Mammary epithelial cell (primary cell): ENCODE measurements at regions of chr2 and their contacts with region 1.

Region 1: DNA sequence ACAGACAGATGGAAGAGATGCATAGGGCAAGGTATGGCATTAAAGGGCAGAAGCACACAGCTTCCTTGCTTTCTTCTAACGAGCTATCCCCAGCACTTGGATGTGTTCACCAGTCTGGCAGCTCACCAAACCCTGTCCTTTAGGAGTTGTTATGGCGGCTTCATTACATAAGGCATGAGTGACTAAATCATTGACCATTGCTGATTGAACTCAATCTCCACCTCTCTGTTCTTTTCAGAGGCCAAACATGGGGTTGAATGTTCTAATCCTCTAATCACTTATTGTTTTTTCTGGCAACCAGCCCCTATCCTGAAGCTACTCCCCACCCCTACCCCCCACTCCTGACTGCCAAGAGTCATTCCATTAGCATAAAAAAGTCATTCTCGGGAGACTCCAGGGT is 301.8 kb downstream of the XIRP2 start:
- DNase-seq: peak; percentile 50
- H3K4me3 ChIP-seq: no peak overlapping the region
- H3K27ac ChIP-seq: no peak overlapping the region
- H3K4me1 ChIP-seq: peaks cover 20% of the 10 kb centered on the region
- H3K27me3 ChIP-seq: no peaks in the 10 kb centered on the region
- CTCF ChIP-seq: no peak

Region 2: DNA sequence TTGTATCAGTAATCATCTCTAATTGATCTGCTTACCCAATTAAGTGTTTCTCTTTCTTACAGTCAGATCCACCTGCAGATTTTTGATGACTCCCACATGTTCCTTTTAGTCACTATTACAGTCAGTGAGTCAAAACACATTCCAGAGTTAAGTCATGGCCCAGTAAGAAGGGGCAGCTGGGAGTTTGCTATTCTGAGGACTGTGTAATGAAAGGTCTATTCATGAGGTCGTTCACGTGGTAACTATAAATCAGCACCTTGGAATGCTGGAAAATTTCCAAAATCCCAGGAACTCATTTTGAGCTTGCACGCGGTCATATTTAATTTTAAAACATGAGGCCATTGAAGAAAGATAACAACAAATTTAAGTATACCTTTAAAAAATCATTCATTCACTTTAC is 49.3 kb before region 1 on chr2:
- CTCF ChIA-PET with region 1: no interaction called
- dilution Hi-C with region 1: no loop called
- in situ Hi-C with region 1: loop called in 1 of 2 experiments (anchors 5 kb)
- intact Hi-C with region 1: no loop called
- DNase-seq: peak; percentile 98
- H3K4me3 ChIP-seq: no peak overlapping the region
- H3K27ac ChIP-seq: peak overlapping the region; percentile 81
- H3K4me1 ChIP-seq: peaks cover 32% of the 10 kb centered on the region
- H3K27me3 ChIP-seq: no peaks in the 10 kb centered on the region
- CTCF ChIP-seq: no peak

Region 3: GRCh38 chr2:167157523-167157922 is 32.5 kb before region 1 on chr2:
- CTCF ChIA-PET with region 1: no interaction called
- dilution Hi-C with region 1: no loop called
- in situ Hi-C with region 1: no loop called
- intact Hi-C with region 1: no loop called
- DNase-seq: no peak
- H3K4me3 ChIP-seq: no peak overlapping the region
- H3K27ac ChIP-seq: no peak overlapping the region
- H3K4me1 ChIP-seq: no peaks in the 10 kb centered on the region
- H3K27me3 ChIP-seq: no peaks in the 10 kb centered on the region
- CTCF ChIP-seq: no peak